Spleen (tissue), 13 donors: ENCODE measurements at regions of chr21 and their contacts with region 1.

Region 1: DNA sequence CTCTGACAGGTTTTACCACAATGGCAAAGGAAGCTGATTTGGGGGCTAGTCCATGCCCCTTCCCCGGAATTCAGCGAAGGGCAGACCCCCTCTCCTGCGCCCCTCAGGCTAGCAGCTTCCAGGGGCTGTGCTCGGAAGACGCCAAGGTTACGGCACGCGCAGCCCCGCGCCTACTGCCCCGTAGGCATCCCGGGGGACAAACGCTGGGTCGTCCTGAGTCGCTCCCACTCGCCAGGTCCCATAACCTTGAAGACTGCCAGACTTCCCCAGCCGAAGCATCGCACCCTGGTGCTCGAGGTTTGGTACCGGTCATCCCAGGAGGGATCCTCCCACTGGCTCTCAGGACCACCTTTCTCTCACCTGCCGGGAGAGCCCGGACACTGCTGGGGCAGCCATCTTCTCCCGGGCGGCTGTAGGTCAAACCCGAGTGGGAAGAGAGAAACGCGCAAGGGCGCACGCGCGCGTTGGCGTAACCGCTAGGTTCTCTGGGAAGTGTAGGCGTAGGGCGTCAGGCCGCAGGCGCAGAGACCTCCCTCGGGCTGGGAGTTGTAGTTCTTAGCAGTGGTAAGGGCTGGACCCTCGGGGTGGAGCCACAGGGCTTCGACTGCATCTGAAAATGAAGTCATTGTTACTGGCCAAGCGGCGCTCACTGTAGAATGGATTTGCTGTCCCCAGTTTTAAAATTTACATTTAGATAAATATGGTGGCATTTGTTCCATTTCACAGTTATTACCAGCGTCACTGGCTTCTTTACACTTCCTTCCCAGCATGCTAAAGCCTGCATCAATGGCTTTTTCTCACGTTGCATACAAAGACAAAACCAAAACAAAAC is at the start of gene ATP5PO:
- DNase-seq: peak; percentile 99
- H3K4me3 ChIP-seq: peak within 1 kb of the TSS; percentile 68 to 85 (median 72)
- H3K27ac ChIP-seq: peak within 1 kb of the TSS; percentile 49 to 90 (median 84)
- H3K4me1 ChIP-seq: peaks cover 12 to 36% (median 27%) of the 10 kb centered on the region in 6 donors
- H3K27me3 ChIP-seq: no peaks in the 10 kb centered on the region
- CTCF ChIP-seq: peak in 5 of 11 experiments; percentile 6 to 28 (median 15)
- POLR2A ChIP-seq: peak; percentile 26 to 66 (median 53)
- total RNA-seq, gene ATP5PO: 97.6 to 154 (median 125) TPM

Region 2: DNA sequence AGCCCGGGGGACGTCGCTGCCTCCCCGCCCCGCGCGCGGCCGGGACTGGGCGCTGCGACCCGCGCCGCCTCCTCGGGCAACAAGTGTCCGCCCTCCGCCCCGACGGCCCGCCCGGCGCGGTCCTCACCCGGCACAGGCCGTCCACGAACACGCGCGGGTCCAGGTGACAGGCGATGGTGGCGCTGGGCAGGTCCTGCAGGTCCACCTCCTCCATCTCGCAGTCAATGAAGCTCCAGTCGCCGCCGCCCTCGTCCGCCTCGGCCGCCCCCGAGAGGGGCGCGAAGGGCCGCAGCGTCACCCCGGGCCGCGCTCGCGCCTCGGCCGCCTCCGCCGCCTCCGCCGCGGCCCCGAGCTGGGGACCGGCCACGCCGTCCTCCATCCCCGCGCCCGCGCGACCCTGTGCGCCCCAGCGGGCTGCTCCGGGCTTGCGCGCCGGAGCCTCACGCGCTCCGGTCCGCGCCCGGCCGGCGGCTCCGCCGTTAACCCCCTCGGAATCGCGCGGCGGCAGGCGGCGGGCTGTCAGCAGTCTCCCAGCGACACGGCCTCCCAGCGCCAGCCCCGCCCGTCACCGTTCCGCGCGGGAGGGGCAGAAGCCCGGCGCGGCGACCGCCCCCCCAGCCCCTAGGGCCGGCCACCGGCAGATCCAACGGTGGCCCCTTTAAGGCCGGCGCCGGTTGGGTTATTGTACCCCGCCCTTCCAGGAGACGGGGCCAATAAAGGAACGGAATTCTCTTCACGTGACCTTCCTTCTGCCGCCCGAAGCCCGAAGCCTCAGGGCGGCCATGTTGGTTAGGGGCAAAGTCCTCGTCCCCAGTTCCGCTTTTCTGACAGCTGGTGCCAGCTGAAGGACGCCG is 699.3 kb after region 1 on chr21 and contains the start of gene RCAN1:
- intact Hi-C with region 1: loop called (anchors 5 kb)
- DNase-seq: peak; percentile 95
- H3K4me3 ChIP-seq: peak within 1 kb of the TSS; percentile 69 to 97 (median 78)
- H3K27ac ChIP-seq: peak within 1 kb of the TSS; percentile 72 to 95 (median 84)
- H3K4me1 ChIP-seq: peaks cover 0 to 38% (median 22%) of the 10 kb centered on the region in 6 donors
- H3K27me3 ChIP-seq: no peaks in the 10 kb centered on the region
- CTCF ChIP-seq: peak in 2 of 11 experiments; percentile 23 to 24
- POLR2A ChIP-seq: no peak
- total RNA-seq, gene RCAN1: 14.0 to 28.6 (median 14.8) TPM